PC-9 (cell line): ENCODE measurements at regions of chr2 and their contacts with region 1.

Region 1: GRCh38 chr2:160652236-160652635 is 158.6 kb upstream of the RBMS1 start:
- DNase-seq: no peak
- H3K4me3 ChIP-seq: no peak overlapping the region
- H3K27ac ChIP-seq: no peak overlapping the region
- H3K4me1 ChIP-seq: peaks cover 35% of the 10 kb centered on the region
- H3K27me3 ChIP-seq: no peaks in the 10 kb centered on the region
- CTCF ChIP-seq: no peak

Region 2: GRCh38 chr2:160269803-160270570 is 382.2 kb before region 1 on chr2:
- CTCF ChIA-PET with region 1: no interaction called
- POLR2A ChIA-PET with region 1: no interaction called
- intact Hi-C with region 1: loop called (anchors 2 kb)
- DNase-seq: peak; percentile 78
- H3K4me3 ChIP-seq: peak overlapping the region; percentile 52; the same call in 1 of the 2 replicates
- H3K27ac ChIP-seq: peak overlapping the region; percentile 86
- H3K4me1 ChIP-seq: peaks cover 26% of the 10 kb centered on the region
- H3K27me3 ChIP-seq: no peaks in the 10 kb centered on the region
- CTCF ChIP-seq: peak; percentile 59

Region 3: DNA sequence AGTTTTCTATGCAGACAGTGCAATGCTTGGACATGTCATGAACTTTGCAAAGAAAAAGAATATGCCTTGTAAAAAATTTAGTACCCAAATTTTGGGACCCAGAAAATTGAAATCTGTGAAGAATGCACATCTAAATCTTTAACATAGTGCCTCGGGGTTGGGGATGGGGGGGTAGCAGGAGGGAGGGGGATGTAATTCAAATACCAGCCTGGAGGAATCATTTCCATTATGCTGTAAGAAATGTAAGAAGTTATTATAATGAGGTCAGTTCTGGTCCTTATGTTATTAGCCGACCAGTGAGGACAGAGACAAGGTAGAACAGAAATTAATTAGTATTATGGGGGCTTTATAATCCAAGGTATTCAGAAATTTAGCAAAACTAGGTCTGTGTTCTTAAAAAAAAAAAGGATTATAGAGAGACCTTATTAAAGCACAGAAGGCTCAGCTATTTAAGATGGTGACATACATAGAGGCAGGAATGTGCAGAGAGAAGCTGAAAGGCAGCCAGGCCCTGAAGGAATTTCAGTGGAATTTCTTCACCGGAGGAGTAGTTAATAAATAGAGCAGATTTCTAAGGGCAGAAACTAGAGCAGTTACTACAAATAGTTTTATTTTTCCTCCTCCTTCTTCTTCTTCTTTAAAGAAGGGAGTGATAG is 69.6 kb before region 1 on chr2:
- CTCF ChIA-PET with region 1: no interaction called
- POLR2A ChIA-PET with region 1: no interaction called
- intact Hi-C with region 1: loop called (anchors 2 kb)
- DNase-seq: peak; percentile 29 to 64
- H3K4me3 ChIP-seq: no peak overlapping the region
- H3K27ac ChIP-seq: no peak overlapping the region
- H3K4me1 ChIP-seq: peaks cover 7% of the 10 kb centered on the region
- H3K27me3 ChIP-seq: no peaks in the 10 kb centered on the region
- CTCF ChIP-seq: no peak

Region 4: GRCh38 chr2:160613466-160614153 is 38.6 kb before region 1 on chr2:
- CTCF ChIA-PET with region 1: no interaction called
- POLR2A ChIA-PET with region 1: no interaction called
- intact Hi-C with region 1: no loop called
- DNase-seq: no peak
- H3K4me3 ChIP-seq: no peak overlapping the region
- H3K27ac ChIP-seq: no peak overlapping the region
- H3K4me1 ChIP-seq: no peaks in the 10 kb centered on the region
- H3K27me3 ChIP-seq: no peaks in the 10 kb centered on the region
- CTCF ChIP-seq: no peak

Region 5: GRCh38 chr2:160674146-160674750 is 22.0 kb after region 1 on chr2:
- CTCF ChIA-PET with region 1: no interaction called
- POLR2A ChIA-PET with region 1: no interaction called
- intact Hi-C with region 1: no loop called
- DNase-seq: no peak
- H3K4me3 ChIP-seq: no peak overlapping the region
- H3K27ac ChIP-seq: no peak overlapping the region
- H3K4me1 ChIP-seq: no peaks in the 10 kb centered on the region
- H3K27me3 ChIP-seq: no peaks in the 10 kb centered on the region
- CTCF ChIP-seq: no peak

Region 6: GRCh38 chr2:160752496-160753330 is 100.5 kb after region 1 on chr2:
- CTCF ChIA-PET with region 1: no interaction called
- POLR2A ChIA-PET with region 1: no interaction called
- intact Hi-C with region 1: loop called (anchors 2 kb)
- DNase-seq: peak; percentile 44 to 83
- H3K4me3 ChIP-seq: peak overlapping the region; percentile 43; the same call in 1 of the 2 replicates
- H3K27ac ChIP-seq: peak overlapping the region; percentile 96
- H3K4me1 ChIP-seq: peaks cover 56% of the 10 kb centered on the region
- H3K27me3 ChIP-seq: no peaks in the 10 kb centered on the region
- CTCF ChIP-seq: no peak

Region 7: DNA sequence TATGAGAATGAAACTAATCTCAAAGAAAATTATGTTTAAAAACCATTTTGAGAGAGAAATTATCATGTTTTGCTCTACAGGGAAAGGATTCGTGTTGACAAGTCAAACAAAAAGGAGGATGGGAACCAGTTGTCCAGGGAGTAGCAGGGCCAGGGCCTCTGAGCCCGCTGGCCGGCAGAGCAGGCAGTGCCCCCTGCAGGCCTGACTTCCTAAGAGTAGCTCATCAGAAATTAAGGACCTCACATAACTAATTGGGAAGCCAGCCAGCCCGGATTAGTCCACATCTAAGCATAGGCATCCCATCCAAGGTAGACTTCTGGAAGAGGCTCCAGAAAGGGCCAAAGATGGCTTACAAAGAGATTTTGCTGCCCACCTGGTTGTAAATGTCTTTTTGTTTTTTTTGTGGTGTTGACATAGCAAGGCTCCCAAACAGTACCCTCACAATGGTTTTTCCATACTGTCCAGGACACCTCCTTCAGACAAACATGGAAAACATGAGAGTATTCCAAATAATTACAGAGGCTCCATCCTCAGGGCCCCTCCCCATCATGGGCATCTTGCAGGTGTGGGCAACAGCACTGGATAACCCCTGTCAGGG is 266.8 kb after region 1 on chr2:
- CTCF ChIA-PET with region 1: no interaction called
- POLR2A ChIA-PET with region 1: no interaction called
- intact Hi-C with region 1: loop called (anchors 5 kb)
- DNase-seq: peak in 1 of 2 experiments; percentile 31
- H3K4me3 ChIP-seq: no peak overlapping the region
- H3K27ac ChIP-seq: no peak overlapping the region
- H3K4me1 ChIP-seq: no peaks in the 10 kb centered on the region
- H3K27me3 ChIP-seq: no peaks in the 10 kb centered on the region
- CTCF ChIP-seq: peak; percentile 59